ENCODE measurements at regions of chr3 and their contacts with region 1.

Region 1: GRCh38 chr3:155908086-155908485 is 37.6 kb downstream of the GMPS start:
- DNase-seq: no peak
- H3K4me3 ChIP-seq: no peak overlapping the region
- H3K27ac ChIP-seq: no peak overlapping the region
- H3K4me1 ChIP-seq: no peaks in the 10 kb centered on the region
- H3K27me3 ChIP-seq: no peaks in the 10 kb centered on the region
- CTCF ChIP-seq: no peak

Region 2: GRCh38 chr3:155766206-155766605 is 141.9 kb before region 1 on chr3:
- CTCF ChIA-PET with region 1: no interaction called
- POLR2A ChIA-PET with region 1: interaction called, 10 read pairs
- intact Hi-C with region 1: no loop called
- DNase-seq: peak in 1 of 2 experiments; percentile 70
- H3K4me3 ChIP-seq: no peak overlapping the region
- H3K27ac ChIP-seq: no peak overlapping the region
- H3K4me1 ChIP-seq: no peaks in the 10 kb centered on the region
- H3K27me3 ChIP-seq: no peaks in the 10 kb centered on the region
- CTCF ChIP-seq: no peak

Measured in PC-9 (cell line).